Dorsolateral prefrontal cortex (tissue), 120 donors: ENCODE measurements at regions of chr4 and their contacts with region 1.

Region 1: GRCh38 chr4:7411896-7412553 is 22.7 kb downstream of the PSAPL1 start:
- DNase-seq: peak in 8 of 10 donors; percentile 9 to 38 (median 28)
- H3K4me3 ChIP-seq: no peak overlapping the region
- H3K27ac ChIP-seq: peak overlapping the region in 1 of 59 donors; percentile 36
- H3K27me3 ChIP-seq: peaks cover 0 to 9% (median 0%) of the 10 kb centered on the region in 45 donors
- CTCF ChIP-seq: no peak

Region 2: GRCh38 chr4:7444747-7445146 is 32.7 kb after region 1 on chr4:
- intact Hi-C with region 1: loop called in 1 of 2 experiments (anchors 5 kb)
- DNase-seq: no peak
- H3K4me3 ChIP-seq: no peak overlapping the region
- H3K27ac ChIP-seq: no peak overlapping the region
- H3K27me3 ChIP-seq: no peaks in the 10 kb centered on the region
- CTCF ChIP-seq: no peak